ENCODE measurements at regions of chr9 and their contacts with region 1.

Region 1: DNA sequence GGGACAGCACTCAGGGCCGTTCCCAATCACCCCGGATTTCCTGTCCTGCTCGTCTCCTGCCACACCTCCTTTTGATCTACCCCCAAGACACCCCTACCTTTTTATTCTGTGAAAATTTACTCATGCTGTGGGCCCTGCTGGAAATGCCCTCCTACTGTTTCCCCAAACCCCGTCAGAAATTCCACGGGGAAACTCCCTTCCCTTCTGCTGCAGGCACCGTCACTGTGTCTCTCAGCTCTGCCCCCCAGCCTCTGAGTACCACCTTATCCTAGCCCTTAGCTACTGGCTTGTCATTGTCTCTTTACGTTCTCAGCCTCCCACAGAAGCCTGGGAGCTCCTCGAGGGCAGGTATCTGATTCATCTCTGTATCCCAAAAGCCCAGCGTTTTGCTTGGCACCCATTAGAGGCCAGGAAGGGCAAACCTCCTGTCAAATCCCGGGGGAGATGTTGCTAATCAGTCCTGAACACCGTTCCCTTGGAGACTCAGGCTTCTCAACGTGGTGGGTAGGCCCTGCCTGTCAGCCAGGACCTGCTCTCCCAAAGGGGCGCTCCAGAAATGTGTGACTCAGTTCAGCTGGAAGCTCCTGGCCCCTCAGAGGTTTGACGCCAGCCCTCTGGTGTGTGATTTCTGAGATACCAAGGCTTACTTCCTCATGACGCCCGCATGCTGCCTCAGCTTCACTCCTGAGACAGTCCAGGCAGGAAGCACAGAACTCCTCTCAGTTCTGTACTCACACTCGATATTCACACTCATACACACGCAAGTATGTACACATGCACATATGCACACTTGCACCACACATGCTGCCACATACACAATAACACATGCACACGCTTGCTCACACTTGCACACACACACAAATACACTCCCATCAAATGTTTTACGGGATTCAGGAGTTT is 50.7 kb upstream of the GRHPR start:
- DNase-seq: no peak
- CTCF ChIP-seq: no peak

Region 2: GRCh38 chr9:37390759-37391158 is 18.9 kb after region 1 on chr9:
- CTCF ChIA-PET with region 1: interaction called, 77 read pairs
- POLR2A ChIA-PET with region 1: interaction called, 6 read pairs
- DNase-seq: peak; percentile 83
- CTCF ChIP-seq: peak; percentile 75

Measured in GM10248 (cell line).